ENCODE measurements at regions of chr2 and their contacts with region 1.

Region 1: GRCh38 chr2:15577071-15577735 is 14.5 kb upstream of the DDX1 start:
- DNase-seq: peak; percentile 95
- ATAC-seq: peak; percentile 99
- H3K4me3 Mint-ChIP-seq: no peak overlapping the region
- H3K27ac Mint-ChIP-seq: no peak overlapping the region
- H3K4me1 Mint-ChIP-seq: peaks cover 10% of the 10 kb centered on the region
- H3K27me3 Mint-ChIP-seq: 0 out of 2 replicates have a peak, but pooled peaks cover 3% of the 10 kb centered on the region
- CTCF ChIP-seq: peak; percentile 56

Region 2: DNA sequence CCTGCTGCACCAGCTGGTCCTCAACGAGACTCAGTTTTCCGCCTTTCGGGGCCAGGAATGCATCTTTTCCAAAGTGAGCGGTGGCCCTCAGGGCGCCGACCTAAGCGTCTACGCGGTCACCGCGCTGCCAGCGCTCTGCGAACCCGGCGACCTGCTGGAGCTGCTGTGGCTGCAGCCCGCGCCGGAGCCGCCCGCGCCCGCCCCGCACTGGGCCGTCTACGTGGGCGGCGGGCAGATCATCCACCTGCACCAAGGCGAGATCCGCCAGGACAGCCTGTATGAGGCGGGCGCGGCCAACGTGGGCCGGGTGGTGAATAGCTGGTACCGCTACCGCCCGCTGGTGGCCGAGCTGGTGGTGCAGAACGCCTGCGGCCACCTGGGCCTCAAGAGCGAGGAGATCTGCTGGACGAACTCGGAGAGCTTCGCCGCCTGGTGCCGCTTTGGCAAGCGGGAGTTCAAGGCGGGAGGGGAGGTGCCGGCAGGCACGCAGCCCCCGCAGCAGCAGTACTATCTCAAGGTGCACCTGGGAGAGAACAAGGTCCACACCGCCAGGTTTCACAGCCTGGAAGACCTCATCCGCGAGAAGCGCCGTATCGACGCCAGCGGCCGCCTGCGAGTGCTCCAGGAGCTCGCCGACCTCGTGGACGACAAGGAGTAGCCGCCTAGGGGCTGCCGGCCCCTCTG is 942.9 kb before region 1 on chr2:
- CTCF ChIA-PET with region 1: interaction called, 14 read pairs
- POLR2A ChIA-PET with region 1: no interaction called
- DNase-seq: peak; percentile 86
- ATAC-seq: peak; percentile 38
- H3K4me3 Mint-ChIP-seq: peak overlapping the region; percentile 79
- H3K27ac Mint-ChIP-seq: no peak overlapping the region
- H3K4me1 Mint-ChIP-seq: peaks cover 28% of the 10 kb centered on the region
- H3K27me3 Mint-ChIP-seq: peaks cover 81% of the 10 kb centered on the region
- CTCF ChIP-seq: no peak

Region 3: DNA sequence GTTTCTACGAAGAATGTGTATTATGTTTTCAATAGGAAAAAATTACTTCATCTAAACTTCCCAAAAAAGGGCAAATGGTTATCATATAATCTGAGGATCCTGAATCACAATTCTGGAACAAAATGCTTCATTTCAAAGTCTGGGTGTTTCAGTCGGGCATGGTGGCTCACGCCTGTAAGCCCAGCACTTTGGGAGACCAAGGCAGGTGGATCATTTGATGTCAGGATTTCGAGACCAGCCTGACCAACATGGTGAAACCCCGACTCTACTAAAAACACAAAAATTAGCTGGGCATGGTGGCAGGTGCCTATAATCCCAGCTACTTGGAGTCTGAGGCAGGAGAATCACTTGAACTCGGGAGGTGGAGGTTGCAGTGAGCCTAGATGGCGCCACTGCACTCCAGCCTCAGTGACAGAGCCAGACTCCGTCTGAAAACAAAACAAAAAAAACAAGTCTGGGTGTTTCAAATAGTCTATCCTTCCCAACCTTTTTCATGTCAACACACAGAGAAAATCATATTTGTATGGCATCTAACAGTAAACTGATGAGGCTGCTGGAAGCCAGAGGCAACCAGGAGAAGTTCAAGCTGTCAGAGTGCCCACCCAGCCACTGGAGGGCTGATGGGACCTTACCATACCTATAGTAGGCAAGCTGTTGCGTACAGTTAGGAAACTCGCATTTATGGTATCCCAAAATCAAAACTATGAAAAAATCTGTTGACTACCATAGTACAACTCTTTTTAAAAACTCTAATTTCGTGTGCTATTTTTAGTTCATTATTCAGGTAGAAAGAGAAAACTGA is 30.7 kb before region 1 on chr2:
- CTCF ChIA-PET with region 1: interaction called, 19 read pairs
- POLR2A ChIA-PET with region 1: no interaction called
- DNase-seq: peak; percentile 14
- ATAC-seq: peak; percentile 51; the same call in 1 of the 2 replicates
- H3K4me3 Mint-ChIP-seq: no peak overlapping the region
- H3K27ac Mint-ChIP-seq: no peak overlapping the region
- H3K4me1 Mint-ChIP-seq: peaks cover 3% of the 10 kb centered on the region
- H3K27me3 Mint-ChIP-seq: no peaks in the 10 kb centered on the region
- CTCF ChIP-seq: peak; percentile 28; the same call in 1 of the 2 replicates

Region 4: DNA sequence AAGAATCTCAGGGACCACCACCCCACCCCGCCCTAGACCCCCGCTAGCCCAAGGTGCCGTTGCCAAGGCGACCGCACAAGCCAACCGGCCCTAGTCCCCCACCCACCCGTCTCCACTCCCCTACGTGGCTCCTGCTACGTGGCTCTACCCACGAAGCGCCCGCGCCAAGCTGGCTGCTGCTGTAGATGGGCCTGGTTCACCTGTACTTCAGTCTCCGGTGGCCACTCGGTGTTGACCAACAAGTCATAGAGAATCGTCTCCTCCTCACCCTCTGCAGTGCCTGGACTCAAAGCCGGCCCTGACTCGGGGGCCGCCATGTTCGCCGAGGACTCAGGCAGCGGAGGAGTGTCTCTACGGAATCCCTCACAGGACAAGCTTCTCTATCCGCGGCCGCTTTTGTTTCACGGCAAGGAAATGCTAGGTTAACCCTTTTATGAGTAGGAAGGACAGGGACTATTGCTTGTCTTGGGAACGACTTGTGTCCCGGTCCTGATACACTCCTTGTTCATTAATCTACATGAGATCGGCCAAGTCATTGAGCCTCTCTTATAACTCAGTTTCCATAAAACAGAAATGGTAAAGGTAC is 16.1 kb before region 1 on chr2 and contains the start of gene NBAS:
- CTCF ChIA-PET with region 1: interaction called, 24 read pairs
- POLR2A ChIA-PET with region 1: no interaction called
- DNase-seq: peak; percentile 81
- ATAC-seq: peak; percentile 92
- H3K4me3 Mint-ChIP-seq: peak within 1 kb of the TSS; percentile 99
- H3K27ac Mint-ChIP-seq: peak within 1 kb of the TSS; percentile 81
- H3K4me1 Mint-ChIP-seq: peaks cover 19% of the 10 kb centered on the region
- H3K27me3 Mint-ChIP-seq: peaks cover 6% of the 10 kb centered on the region
- CTCF ChIP-seq: no peak
- total RNA-seq, gene NBAS: 32.3 to 42.6 TPM (median 41.4 TPM) in 3 replicates

Region 5: GRCh38 chr2:15588329-15588919 is 11.2 kb after region 1 on chr2:
- CTCF ChIA-PET with region 1: interaction called, 21 read pairs
- POLR2A ChIA-PET with region 1: no interaction called
- DNase-seq: peak; percentile 62
- ATAC-seq: peak; percentile 13
- H3K4me3 Mint-ChIP-seq: no peak overlapping the region
- H3K27ac Mint-ChIP-seq: no peak overlapping the region
- H3K4me1 Mint-ChIP-seq: peaks cover 13% of the 10 kb centered on the region
- H3K27me3 Mint-ChIP-seq: peaks cover 4% of the 10 kb centered on the region; the same call in 1 of the 2 replicates
- CTCF ChIP-seq: peak; percentile 39; the same call in 1 of the 2 replicates

Region 6: DNA sequence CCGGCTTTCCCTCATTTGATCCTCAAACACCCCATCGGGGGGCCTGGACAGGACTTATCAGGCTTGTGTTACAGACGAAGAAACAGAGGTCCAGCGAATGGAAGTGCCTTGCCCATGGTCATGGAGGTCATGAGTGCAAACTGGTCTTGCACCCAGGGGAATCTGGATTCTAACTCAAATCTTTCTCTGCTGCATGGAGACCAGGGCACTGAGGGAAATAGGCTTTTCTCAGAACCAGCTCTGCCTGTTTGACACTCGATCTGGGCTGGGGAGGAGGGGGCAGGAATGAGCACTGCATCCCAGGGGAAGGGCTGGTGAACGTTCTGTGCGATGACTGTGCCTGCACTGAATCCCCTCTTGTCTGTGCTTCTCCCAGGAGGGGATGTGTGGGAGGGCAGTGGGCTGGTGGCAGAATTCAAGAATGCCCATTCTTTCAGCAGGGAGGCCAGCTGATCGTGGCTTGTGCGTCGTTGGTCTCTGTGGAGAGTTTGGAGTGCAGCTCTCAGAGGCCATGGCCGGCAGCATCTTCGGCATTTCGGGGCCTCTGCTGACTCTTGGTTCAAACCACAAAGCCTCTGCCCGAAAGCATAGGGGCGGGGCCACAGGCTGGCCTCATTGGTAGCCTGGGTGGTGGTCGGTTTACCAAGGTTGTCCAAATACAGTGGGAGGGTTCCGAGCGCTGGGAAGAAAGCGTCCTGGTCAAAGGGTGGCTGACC is 186.1 kb after region 1 on chr2:
- CTCF ChIA-PET with region 1: no interaction called
- POLR2A ChIA-PET with region 1: no interaction called
- DNase-seq: no peak
- ATAC-seq: no peak
- H3K4me3 Mint-ChIP-seq: no peak overlapping the region
- H3K27ac Mint-ChIP-seq: no peak overlapping the region
- H3K4me1 Mint-ChIP-seq: peaks cover 20% of the 10 kb centered on the region
- H3K27me3 Mint-ChIP-seq: no peaks in the 10 kb centered on the region
- CTCF ChIP-seq: no peak